GM10248 (cell line): ENCODE measurements at regions of chr1 and their contacts with region 1.

Region 1: GRCh38 chr1:109397538-109398342 is at the start of gene SORT1:
- DNase-seq: peak; percentile 71
- CTCF ChIP-seq: peak; percentile 7

Region 2: DNA sequence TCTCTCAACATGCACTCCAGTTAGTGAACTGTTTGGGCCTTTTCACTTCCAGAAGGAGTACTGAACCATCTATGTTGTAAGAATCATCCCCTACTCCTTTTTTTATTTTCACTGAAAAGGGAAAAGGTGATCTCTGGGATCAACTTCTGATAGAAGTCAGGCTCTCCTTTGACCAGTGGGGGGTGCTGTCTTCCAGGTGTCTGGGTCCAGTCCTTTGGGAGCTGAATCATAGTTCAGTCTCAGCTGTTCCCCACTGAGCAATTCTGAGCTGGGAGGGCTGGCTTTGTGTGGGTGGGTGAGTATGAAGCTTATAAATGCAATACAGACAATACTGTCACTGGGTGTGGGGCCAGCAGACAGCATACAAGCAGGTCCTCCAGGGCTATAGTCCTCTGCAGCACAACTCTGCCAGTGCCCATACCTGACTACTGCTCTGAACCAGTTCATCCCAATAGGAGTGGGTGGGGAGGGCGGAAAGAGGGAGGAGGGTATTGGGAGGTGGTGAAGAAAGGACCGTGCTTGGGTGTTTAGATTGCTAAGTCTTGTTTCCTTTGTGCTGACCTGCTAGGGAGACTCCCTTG is 196.5 kb before region 1 on chr1:
- CTCF ChIA-PET with region 1: interaction called, 12 read pairs
- POLR2A ChIA-PET with region 1: no interaction called
- DNase-seq: peak; percentile 75
- CTCF ChIP-seq: peak; percentile 62

Region 3: DNA sequence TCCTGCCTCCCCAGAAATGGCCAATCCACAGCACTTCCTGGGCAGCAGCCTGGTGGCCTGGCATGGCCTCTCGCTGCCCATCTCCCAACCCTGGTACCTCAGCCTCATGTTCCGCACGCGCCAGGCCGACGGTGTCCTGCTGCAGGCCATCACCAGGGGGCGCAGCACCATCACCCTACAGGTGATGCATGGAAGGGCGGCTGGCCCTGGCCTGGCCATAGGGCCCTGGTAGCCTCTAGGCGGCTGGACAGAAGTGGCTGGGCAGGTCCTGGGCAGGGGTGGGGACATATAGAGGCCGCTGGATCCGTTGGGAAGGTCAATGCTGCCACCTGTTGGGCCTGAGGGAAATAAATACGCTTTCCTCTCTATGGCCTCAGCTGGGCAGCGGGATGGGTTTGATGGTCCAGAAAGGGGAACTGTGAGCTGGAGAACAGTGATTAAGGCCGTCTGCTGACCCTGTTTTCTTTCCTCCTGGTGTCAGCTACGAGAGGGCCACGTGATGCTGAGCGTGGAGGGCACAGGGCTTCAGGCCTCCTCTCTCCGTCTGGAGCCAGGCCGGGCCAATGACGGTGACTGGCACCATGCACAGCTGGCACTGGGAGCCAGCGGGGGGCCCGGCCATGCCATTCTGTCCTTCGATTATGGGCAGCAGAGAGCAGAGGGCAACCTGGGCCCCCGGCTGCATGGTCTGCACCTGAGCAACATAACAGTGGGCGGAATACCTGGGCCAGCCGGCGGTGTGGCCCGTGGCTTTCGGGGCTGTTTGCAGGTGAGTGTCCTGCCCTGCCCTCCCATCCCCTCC is 133.9 kb before region 1 on chr1:
- CTCF ChIA-PET with region 1: interaction called, 27 read pairs
- POLR2A ChIA-PET with region 1: no interaction called
- DNase-seq: peak; percentile 85
- CTCF ChIP-seq: peak; percentile 89

Region 4: GRCh38 chr1:109282952-109283747 is 114.6 kb before region 1 on chr1 and contains the start of gene PSRC1:
- CTCF ChIA-PET with region 1: interaction called, 197 read pairs
- POLR2A ChIA-PET with region 1: no interaction called
- DNase-seq: peak; percentile 97
- CTCF ChIP-seq: peak; percentile 63

Region 5: DNA sequence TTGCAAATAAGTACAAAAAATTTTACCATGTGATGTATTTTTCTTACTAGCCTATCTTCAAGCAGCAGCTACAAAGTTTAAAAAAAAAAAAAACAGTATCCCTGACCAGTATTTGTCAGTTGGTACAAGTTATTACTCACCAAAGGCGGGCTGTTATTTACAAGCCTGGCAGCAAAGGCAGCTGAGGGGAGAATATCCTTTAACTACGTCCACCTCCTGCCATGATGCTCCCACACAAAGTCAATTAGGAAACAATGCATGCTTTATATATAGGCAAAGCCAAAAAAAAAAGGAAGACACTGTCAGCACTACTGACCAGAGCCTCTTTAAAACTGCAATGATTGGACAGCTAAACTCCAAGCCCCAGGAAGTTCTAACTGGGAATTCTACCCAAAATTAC is 14.8 kb after region 1 on chr1:
- CTCF ChIA-PET with region 1: interaction called, 42 read pairs
- POLR2A ChIA-PET with region 1: no interaction called
- DNase-seq: no peak
- CTCF ChIP-seq: no peak

Region 6: GRCh38 chr1:109447524-109447923 is 49.8 kb after region 1 on chr1:
- CTCF ChIA-PET with region 1: no interaction called
- POLR2A ChIA-PET with region 1: no interaction called
- DNase-seq: no peak
- CTCF ChIP-seq: no peak